ENCODE measurements at regions of chr12 and their contacts with region 1.

Region 1: GRCh38 chr12:54368709-54369583 is 4.7 kb upstream of the GPR84 start:
- DNase-seq: peak; percentile 86 to 96 (median 92)
- H3K4me3 ChIP-seq: peak overlapping the region in 1 of 4 donors; percentile 40
- H3K27ac ChIP-seq: peak overlapping the region in 1 of 5 donors; percentile 51
- H3K4me1 ChIP-seq: peaks cover 3 to 32% of the 10 kb centered on the region in 2 donors
- H3K27me3 ChIP-seq: no peaks in the 10 kb centered on the region
- CTCF ChIP-seq: peak; percentile 60 to 90 (median 84)
- POLR2A ChIP-seq: no peak

Region 2: DNA sequence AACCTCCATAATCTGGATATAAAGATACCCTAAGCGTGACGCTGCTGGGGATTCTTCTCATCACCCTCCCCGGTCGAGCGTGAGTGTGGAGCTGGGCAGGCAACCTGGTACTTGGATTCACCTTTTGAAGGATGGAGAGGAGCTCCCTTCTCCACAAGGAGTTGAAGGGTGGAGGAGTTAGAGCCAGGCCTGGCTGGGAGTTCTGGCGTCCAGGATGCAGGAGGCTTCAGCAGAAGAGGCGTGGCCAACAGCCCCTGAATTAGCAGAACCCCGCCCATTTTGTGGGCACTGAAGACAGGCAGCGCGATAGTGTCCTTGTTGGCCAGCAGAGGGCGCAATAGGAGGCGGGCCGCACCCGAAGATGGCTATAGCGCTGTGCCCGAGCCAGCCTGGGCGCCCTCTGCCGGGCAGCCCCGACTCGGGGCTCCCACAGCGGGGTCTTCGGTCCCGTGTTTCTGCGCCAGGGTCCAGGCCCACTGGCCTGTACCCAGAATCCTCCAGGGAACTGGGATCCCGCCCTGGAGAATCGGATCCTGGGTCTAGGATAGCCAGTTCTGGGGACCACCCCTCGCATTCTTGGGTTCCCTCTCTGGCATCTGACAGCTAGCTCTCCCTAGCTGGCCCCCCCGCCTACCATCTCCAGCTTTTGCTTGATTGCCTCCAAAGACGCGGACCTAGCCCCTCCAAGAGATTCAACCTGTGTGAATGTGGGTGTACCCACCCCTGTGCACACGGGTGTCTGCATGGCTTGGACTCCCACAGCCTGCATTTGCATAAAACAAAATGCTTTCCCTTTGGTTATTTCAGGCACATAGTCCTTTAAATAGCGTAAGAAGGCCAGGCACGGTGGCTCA is 154.2 kb before region 1 on chr12:
- intact Hi-C with region 1: loop called in 1 of 2 experiments (anchors 5 kb)
- DNase-seq: peak; percentile 85 to 94 (median 91)
- H3K4me3 ChIP-seq: no peak overlapping the region
- H3K27ac ChIP-seq: no peak overlapping the region
- H3K4me1 ChIP-seq: peaks cover 0 to 13% of the 10 kb centered on the region in 2 donors
- H3K27me3 ChIP-seq: peaks cover 14% of the 10 kb centered on the region
- CTCF ChIP-seq: peak; percentile 92 to 98 (median 96)
- POLR2A ChIP-seq: no peak

Region 3: DNA sequence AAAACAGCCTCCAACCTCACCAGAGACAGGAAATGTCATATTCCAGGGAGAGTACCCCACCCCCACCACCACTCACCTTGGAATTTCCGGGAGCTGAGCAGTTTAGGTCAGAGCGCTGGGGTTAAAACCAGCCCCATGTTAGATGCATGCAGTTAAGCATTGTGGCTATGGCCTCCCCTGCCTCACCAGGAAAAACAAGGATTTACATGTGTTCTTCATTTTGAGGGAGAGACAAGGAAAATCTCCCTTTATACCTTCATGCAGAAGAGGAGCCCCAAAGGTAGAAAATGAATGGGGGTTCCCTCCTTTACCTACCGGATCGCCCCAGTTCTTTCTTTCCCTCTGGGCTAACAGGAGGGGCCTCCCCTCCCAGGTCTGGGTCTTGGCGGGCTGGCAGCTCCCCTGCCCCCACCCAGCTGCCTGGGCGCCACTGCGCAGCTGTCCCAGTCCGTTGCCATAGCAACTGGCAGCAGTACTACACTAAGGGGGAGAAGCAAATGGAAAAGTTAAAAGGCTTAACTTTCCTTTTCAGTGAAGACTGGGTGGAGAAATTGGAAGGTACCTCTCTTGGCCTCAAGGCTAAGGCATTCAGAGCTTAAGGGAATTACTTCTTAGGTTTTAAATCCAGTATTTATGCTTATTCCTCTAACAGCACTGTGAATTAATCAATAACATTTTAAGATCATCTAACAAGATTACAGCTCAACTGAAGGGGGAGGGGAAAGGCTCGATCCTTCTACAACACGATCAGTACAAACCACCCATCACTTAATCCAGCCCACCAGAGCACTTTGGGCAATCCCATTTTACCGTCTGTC is 109.5 kb before region 1 on chr12:
- intact Hi-C with region 1: loop called in 1 of 2 experiments (anchors 10 kb)
- DNase-seq: peak; percentile 78 to 90 (median 85)
- H3K4me3 ChIP-seq: peak overlapping the region in 2 of 4 donors; percentile 5 to 64
- H3K27ac ChIP-seq: peak overlapping the region; percentile 3 to 88 (median 55)
- H3K4me1 ChIP-seq: peaks cover 41 to 49% of the 10 kb centered on the region in 2 donors
- H3K27me3 ChIP-seq: no peaks in the 10 kb centered on the region
- CTCF ChIP-seq: no peak
- POLR2A ChIP-seq: no peak

Region 4: GRCh38 chr12:54294152-54294952 is 74.6 kb before region 1 on chr12:
- intact Hi-C with region 1: loop called (anchors 5 to 10 kb)
- DNase-seq: peak; percentile 51 to 80 (median 61)
- H3K4me3 ChIP-seq: no peak overlapping the region
- H3K27ac ChIP-seq: no peak overlapping the region
- H3K4me1 ChIP-seq: no peaks in the 10 kb centered on the region
- H3K27me3 ChIP-seq: no peaks in the 10 kb centered on the region
- CTCF ChIP-seq: peak; percentile 62 to 89 (median 74)
- POLR2A ChIP-seq: no peak

Region 5: DNA sequence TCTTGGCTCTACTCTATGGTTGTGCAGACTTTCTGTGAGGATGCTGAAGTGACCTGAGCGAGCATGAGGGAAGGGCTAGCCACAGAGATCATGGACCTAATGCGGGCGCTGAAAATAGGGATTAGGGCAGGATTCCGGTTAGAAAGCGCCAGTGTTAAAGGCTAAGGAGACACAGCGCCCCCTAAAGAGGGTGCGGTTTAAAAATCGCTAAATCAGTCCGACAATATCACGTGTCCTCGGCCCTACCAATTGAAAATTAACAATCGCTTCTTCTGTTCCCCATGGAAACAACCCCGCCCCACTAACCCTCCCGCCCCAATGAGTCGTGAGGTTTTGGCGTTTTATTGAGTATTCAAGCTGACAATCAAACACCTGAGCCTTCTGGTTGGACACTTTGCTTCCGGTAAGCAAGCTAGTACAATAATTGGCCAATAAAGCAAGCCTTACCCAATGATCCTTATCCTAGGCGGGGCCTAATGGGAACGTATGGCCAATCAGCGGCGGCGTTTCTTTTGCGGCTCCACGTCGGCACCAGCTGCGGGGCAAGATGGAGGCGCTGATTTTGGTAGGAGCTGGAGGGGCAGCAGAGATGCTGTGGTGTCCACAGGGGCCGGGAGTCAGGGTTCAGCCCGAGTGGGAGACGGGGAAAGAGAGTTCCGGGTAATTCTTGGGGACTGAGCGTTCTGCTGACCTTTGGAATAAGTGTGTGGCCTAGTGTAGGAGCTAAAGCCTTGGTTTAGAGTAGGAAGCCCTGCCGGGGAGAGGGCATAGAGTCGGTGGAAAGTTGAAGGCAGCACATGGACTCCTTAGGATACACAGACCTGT is 44.1 kb before region 1 on chr12 and contains the start of gene COPZ1:
- intact Hi-C with region 1: no loop called
- DNase-seq: peak; percentile 94 to 99 (median 98)
- H3K4me3 ChIP-seq: peak within 1 kb of the TSS; percentile 12 to 70 (median 64)
- H3K27ac ChIP-seq: peak within 1 kb of the TSS; percentile 45 to 91 (median 79)
- H3K4me1 ChIP-seq: peaks cover 0 to 41% of the 10 kb centered on the region in 2 donors
- H3K27me3 ChIP-seq: no peaks in the 10 kb centered on the region
- CTCF ChIP-seq: peak; percentile 55 to 74 (median 68)
- POLR2A ChIP-seq: peak; percentile 67 to 83
- total RNA-seq, gene COPZ1: 95.2 to 183 (median 152) TPM

Region 6: GRCh38 chr12:54611715-54612149 is 242.8 kb after region 1 on chr12:
- intact Hi-C with region 1: no loop called
- DNase-seq: no peak
- H3K4me3 ChIP-seq: no peak overlapping the region
- H3K27ac ChIP-seq: no peak overlapping the region
- H3K4me1 ChIP-seq: no peaks in the 10 kb centered on the region
- H3K27me3 ChIP-seq: peaks cover 14% of the 10 kb centered on the region
- CTCF ChIP-seq: no peak
- POLR2A ChIP-seq: no peak

Region 7: GRCh38 chr12:54701940-54702592 is 333.1 kb after region 1 on chr12:
- intact Hi-C with region 1: no loop called
- DNase-seq: peak in 1 of 7 donors; percentile 4
- H3K4me3 ChIP-seq: no peak overlapping the region
- H3K27ac ChIP-seq: no peak overlapping the region
- H3K4me1 ChIP-seq: no peaks in the 10 kb centered on the region
- H3K27me3 ChIP-seq: no peaks in the 10 kb centered on the region
- CTCF ChIP-seq: peak; percentile 36 to 66 (median 57)
- POLR2A ChIP-seq: no peak

Measured in adrenal gland (tissue), 19 donors.